Kidney (tissue), 22 donors: ENCODE measurements at regions of chr12 and their contacts with region 1.

Region 1: DNA sequence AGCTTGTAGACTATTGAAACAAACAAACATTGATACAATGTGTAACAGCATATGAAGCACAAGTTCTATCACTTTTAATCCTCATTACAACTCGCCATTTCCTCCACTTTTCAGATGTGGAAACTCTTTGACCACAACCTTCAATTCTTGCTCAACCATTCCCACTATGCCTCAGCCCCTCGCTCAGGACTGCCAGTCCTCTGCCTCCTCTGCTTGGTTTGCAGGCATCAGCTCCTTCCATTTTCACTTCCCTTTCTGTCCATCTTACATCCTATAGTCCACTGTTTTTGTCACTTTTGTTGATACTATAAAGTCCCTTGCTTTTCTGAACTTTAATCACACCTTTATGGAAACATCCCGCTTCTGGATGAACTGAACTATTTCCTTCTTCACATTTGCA is 28.2 kb upstream of the CD27 start:
- DNase-seq: no peak
- H3K4me3 ChIP-seq: no peak overlapping the region
- H3K27ac ChIP-seq: no peak overlapping the region
- H3K4me1 ChIP-seq: no peaks in the 10 kb centered on the region
- H3K27me3 ChIP-seq: no peaks in the 10 kb centered on the region
- CTCF ChIP-seq: no peak

Region 2: GRCh38 chr12:6465467-6466183 is 49.0 kb after region 1 on chr12:
- intact Hi-C with region 1: loop called (anchors 10 kb)
- DNase-seq: peak in 4 of 5 donors; percentile 63 to 86 (median 77)
- H3K4me3 ChIP-seq: no peak overlapping the region
- H3K27ac ChIP-seq: no peak overlapping the region
- H3K4me1 ChIP-seq: peaks cover 3 to 12% (median 4%) of the 10 kb centered on the region in 3 donors
- H3K27me3 ChIP-seq: no peaks in the 10 kb centered on the region
- CTCF ChIP-seq: peak; percentile 91

Region 3: GRCh38 chr12:6953442-6954315 is 537.1 kb after region 1 on chr12:
- intact Hi-C with region 1: no loop called
- DNase-seq: peak in 2 of 5 donors; percentile 86 to 88
- H3K4me3 ChIP-seq: no peak overlapping the region
- H3K27ac ChIP-seq: peak overlapping the region in 1 of 2 donors; percentile 57
- H3K4me1 ChIP-seq: peaks cover 0 to 6% (median 0%) of the 10 kb centered on the region in 3 donors
- H3K27me3 ChIP-seq: no peaks in the 10 kb centered on the region
- CTCF ChIP-seq: no peak